ENCODE measurements at regions of chrX and their contacts with region 1.

Region 1: DNA sequence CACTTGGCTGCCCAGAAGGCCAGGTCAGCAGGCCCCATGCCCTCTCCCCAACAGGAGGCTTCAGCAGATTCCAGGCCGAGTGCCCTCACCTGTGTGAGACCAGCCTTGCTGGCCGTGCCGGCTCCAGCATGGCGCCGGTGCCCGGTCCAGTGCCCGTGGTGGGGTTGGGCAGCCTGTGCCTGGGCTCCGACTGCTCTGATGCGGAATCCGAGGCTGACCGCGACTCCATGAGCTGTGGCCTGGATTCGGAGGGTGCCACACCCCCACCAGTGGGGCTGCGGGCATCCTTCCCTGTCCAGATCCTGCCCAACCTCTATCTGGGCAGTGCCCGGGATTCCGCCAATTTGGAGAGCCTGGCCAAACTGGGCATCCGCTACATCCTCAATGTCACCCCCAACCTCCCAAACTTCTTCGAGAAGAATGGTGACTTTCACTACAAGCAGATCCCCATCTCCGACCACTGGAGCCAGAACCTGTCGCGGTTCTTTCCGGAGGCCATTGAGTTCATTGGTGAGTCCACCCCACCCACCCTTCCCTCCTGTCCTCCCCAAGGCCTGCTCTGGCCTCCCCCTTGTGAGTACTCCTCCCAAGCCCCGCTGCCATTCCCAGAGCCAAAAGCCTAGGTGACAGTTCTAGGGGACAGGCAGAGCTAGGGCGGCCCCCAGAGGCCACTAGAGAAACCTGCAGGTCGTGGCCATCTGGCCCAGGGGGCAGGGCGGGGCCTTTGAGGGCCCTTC is 2.3 kb downstream of the DUSP9 start:
- H3K4me3 Mint-ChIP-seq: no peak overlapping the region
- H3K27ac Mint-ChIP-seq: no peak overlapping the region
- H3K4me1 Mint-ChIP-seq: no peaks in the 10 kb centered on the region
- H3K27me3 Mint-ChIP-seq: peaks cover 52% of the 10 kb centered on the region

Region 2: GRCh38 chrX:153539171-153539978 is 110.0 kb before region 1 on chrX:
- intact Hi-C with region 1: loop called (anchors 5 kb)
- H3K4me3 Mint-ChIP-seq: no peak overlapping the region
- H3K27ac Mint-ChIP-seq: no peak overlapping the region
- H3K4me1 Mint-ChIP-seq: no peaks in the 10 kb centered on the region
- H3K27me3 Mint-ChIP-seq: peaks cover 17% of the 10 kb centered on the region

Region 3: GRCh38 chrX:153554519-153555167 is 94.7 kb before region 1 on chrX:
- intact Hi-C with region 1: loop called (anchors 5 kb)
- H3K4me3 Mint-ChIP-seq: no peak overlapping the region
- H3K27ac Mint-ChIP-seq: no peak overlapping the region
- H3K4me1 Mint-ChIP-seq: peaks cover 8% of the 10 kb centered on the region
- H3K27me3 Mint-ChIP-seq: peaks cover 19% of the 10 kb centered on the region

Region 4: DNA sequence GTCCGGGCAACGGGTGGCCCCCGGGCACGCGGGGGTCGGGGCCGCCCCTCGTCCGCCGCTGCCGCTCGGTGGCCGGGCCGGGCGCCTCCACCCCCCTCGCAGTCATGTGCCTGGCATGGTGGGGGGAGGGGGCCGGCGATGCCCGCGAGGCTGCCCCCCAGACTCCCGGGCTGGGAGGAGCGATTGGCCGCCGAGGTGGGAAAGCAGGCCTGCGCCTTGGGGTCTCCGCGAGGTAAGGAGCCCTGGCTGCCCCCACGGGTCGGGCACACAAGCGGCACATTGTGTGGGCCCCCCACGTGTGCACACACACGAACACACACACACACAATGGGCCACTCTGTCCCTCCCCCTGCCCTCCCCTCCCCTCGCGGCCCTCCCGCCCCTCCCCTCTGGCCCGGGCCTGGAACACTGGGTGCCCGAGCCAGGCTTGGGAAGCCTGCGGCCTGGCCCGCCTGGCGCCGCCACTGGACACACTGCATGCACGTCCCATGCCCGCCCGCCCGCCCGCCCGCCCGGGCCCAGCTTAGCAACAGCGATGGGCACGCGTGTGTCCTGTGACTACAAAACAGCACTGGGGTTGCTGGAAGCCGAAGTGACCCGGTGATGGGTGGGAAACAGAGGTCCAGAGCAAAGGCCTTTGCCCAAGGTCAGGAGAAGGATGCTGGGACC is 39.7 kb after region 1 on chrX:
- intact Hi-C with region 1: no loop called
- H3K4me3 Mint-ChIP-seq: no peak overlapping the region
- H3K27ac Mint-ChIP-seq: no peak overlapping the region
- H3K4me1 Mint-ChIP-seq: peaks cover 20% of the 10 kb centered on the region
- H3K27me3 Mint-ChIP-seq: peaks cover 53% of the 10 kb centered on the region

Measured in dendritic cell treated with granulocyte-macrophage colony-stimulating factor and Interleukin-4, amounts not matched to agents 40 ng/mL and 50 ng/mL, for 4 days (primary cell).